PC-3 (cell line): ENCODE measurements at regions of chr20 and their contacts with region 1.

Region 1: DNA sequence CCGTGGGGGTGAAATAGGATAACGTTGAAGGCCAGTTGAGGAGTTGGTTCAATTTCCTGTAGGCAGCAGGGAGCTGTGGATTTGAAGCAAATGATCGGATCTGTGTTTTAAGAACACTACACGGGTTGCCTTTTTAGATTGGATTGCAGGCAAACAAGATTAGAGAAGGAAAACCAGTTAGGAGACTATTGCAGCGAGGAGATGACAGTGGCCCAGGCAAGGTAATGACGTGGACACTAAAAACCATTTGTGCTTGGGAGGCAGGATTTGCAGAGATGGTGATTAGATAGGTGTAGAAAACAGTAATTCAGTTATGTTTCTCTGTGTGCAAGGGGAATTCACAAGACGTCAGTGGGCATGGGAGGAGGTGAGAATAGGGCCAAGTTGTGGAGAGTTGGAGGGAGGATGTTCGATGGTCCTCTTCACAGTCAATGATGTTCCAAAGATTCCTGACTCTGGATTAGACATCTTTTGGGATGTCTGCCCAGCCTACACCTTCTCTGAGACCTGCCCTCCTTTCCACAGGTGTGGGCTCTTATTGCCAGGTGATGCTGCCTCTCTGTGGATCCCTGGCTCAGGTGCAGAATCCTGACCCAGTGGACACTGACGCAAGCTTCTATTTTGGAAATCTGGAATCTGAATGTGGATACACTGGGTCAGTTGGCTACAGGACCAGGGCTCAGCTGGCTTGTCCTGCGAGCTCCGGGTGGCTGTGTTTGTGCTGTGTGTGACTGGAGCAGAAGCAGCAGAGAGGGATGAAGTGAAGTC is 54.2 kb downstream of the TFAP2C start:
- DNase-seq: no peak
- ATAC-seq: no peak
- H3K4me3 ChIP-seq: no peak overlapping the region
- H3K27ac ChIP-seq: no peak overlapping the region
- H3K4me1 ChIP-seq: no peaks in the 10 kb centered on the region
- H3K27me3 ChIP-seq: no peaks in the 10 kb centered on the region
- CTCF ChIP-seq: no peak

Region 2: GRCh38 chr20:56656632-56657031 is 26.6 kb before region 1 on chr20:
- CTCF ChIA-PET with region 1: no interaction called
- POLR2A ChIA-PET with region 1: interaction called, 13 read pairs
- intact Hi-C with region 1: no loop called
- DNase-seq: no peak
- ATAC-seq: no peak
- H3K4me3 ChIP-seq: no peak overlapping the region
- H3K27ac ChIP-seq: no peak overlapping the region
- H3K4me1 ChIP-seq: no peaks in the 10 kb centered on the region
- H3K27me3 ChIP-seq: no peaks in the 10 kb centered on the region
- CTCF ChIP-seq: no peak

Region 3: DNA sequence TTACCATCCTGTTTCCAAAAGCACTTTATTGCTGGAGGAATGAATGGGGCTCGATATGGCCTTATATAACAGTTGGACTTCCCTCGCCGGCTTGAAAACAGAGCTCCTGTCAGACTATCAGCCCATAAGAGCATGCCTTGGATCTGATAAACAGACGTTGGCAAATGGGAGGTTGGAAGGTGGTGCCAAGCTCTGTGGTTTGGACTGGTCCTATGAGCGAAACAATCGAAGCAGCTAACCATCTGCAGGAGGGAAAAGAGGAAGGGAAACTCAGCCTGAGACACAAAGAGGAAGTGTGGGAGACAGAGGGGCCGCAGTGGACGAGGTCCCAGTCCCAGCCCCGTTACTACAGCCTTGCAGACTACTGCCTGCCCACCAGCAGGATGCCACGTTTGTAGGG is 38.8 kb after region 1 on chr20:
- CTCF ChIA-PET with region 1: no interaction called
- POLR2A ChIA-PET with region 1: no interaction called
- intact Hi-C with region 1: no loop called
- DNase-seq: no peak
- ATAC-seq: no peak
- H3K4me3 ChIP-seq: no peak overlapping the region
- H3K27ac ChIP-seq: no peak overlapping the region
- H3K4me1 ChIP-seq: no peaks in the 10 kb centered on the region
- H3K27me3 ChIP-seq: no peaks in the 10 kb centered on the region
- CTCF ChIP-seq: no peak